AG04450 (cell line): ENCODE measurements at regions of chr12 and their contacts with region 1.

Region 1: GRCh38 chr12:54324617-54325441 is at the start of gene COPZ1:
- DNase-seq: peak; percentile 99
- H3K4me3 ChIP-seq: peak within 1 kb of the TSS; percentile 75
- H3K27ac ChIP-seq: peak within 1 kb of the TSS; percentile 88
- H3K27me3 ChIP-seq: no peaks in the 10 kb centered on the region
- CTCF ChIP-seq: peak; percentile 83
- polyA plus RNA-seq, gene COPZ1: 355 and 404 TPM in 2 replicates

Region 2: DNA sequence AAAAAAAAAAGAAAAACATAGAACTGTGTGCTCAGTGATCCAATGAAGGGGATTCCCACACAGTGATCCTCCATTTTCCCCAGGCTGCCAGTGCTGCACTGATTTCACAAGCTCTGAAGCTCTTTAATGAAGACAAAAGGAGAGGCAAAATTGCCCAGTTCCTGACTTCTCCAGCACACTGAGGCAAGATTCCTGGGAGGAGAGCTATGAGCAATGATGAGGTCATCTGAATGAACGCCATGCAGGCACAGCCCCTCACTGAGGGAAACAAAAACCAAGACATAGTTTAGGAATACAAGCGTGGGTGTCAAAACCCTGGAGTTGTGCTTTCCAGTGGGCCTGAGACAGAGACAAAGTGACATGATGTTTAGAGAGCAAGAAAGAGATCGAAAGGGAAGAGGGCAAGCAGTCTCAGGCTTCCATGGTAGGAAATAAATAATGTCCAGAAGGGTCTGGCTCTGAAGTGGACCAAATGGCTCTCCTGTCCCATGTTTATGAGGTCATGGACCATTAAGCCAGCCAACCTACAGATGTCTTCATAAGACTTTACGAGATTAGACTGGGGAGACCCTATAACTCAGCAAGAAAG is 95.1 kb before region 1 on chr12:
- CTCF ChIA-PET with region 1: interaction called, 13 read pairs
- POLR2A ChIA-PET with region 1: no interaction called
- DNase-seq: peak; percentile 92
- H3K4me3 ChIP-seq: no peak overlapping the region
- H3K27ac ChIP-seq: peak overlapping the region; percentile 82
- H3K27me3 ChIP-seq: no peaks in the 10 kb centered on the region
- CTCF ChIP-seq: no peak

Region 3: DNA sequence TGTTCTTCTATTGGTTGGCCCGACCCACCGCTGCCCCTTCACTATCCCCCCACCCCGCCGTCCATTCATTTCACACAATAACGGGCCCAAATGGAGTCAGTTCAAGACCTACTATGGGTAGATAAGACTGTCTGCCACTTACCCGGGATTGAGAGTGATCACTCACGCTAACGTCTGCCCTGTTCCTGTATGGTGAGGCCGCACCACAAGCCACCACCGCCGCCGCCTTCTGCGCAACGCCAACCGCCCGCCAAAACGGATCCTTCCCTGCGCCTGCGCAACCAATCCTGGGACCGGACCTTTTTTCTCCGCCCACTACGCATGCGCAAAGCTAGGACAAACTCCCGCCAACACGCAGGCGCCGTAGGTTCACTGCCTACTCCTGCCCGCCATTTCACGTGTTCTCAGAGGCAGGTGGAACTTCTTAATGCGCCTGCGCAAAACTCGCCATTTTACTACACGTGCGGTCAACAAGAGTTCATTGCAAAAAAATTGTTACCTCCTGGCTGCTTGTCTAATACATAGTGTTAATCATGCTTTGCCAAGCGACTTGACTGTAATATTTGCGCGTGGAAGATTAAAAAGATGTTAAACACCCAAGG is 44.9 kb before region 1 on chr12 and contains the start of gene CBX5:
- CTCF ChIA-PET with region 1: interaction called, 37 read pairs
- POLR2A ChIA-PET with region 1: interaction called, 17 read pairs
- DNase-seq: peak; percentile 99
- H3K4me3 ChIP-seq: peak within 1 kb of the TSS; percentile 93
- H3K27ac ChIP-seq: peak within 1 kb of the TSS; percentile 87
- H3K27me3 ChIP-seq: no peaks in the 10 kb centered on the region
- CTCF ChIP-seq: no peak
- polyA plus RNA-seq, gene CBX5: 49.0 and 62.3 TPM in 2 replicates

Region 4: GRCh38 chr12:54300732-54301427 is 23.9 kb before region 1 on chr12 and contains the start of gene NFE2:
- CTCF ChIA-PET with region 1: interaction called, 77 read pairs
- POLR2A ChIA-PET with region 1: no interaction called
- DNase-seq: peak; percentile 51
- H3K4me3 ChIP-seq: peak within 1 kb of the TSS; percentile 54
- H3K27ac ChIP-seq: no peak within 1 kb of the TSS
- H3K27me3 ChIP-seq: peaks cover 36% of the 10 kb centered on the region
- CTCF ChIP-seq: peak; percentile 19
- polyA plus RNA-seq, gene NFE2: 0.25 and 0.37 TPM in 2 replicates

Region 5: DNA sequence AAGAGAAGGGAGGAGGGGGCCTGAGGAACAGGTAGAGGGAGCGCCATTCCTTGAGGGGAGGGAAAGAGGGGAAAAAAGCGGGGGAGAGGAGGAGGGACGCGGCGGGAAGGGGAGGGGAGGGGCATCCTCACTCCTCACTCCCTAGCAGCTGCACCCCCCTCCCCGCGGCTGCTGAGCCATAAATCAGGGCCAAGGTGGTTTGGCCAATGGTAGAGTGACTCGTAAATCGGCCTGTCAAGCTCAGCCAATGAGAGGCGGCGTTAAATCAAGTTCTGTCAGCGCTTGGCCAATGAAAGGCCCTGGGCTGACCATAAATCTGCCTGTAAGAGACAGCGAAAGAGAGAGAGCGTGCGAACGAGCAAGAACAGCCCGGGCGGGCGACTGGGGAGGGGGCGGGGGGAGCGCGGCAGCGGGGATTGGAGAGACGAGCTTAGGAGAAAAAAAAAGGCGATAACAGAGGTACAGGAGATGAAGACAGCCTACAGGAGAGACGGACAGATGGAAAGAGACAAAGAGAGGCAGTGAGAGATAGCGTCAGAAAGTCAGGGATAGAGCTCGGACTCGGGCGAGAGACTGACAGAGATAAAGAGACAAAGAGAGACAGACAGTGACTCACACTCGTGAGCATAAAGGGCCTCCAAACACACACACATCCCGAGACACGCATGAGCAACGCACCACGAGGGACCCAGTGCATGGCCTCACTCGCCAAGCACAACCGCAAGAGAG is 34.4 kb after region 1 on chr12:
- CTCF ChIA-PET with region 1: interaction called, 18 read pairs
- POLR2A ChIA-PET with region 1: interaction called, 16 read pairs
- DNase-seq: peak; percentile 99
- H3K4me3 ChIP-seq: peak overlapping the region; percentile 65
- H3K27ac ChIP-seq: peak overlapping the region; percentile 97
- H3K27me3 ChIP-seq: no peaks in the 10 kb centered on the region
- CTCF ChIP-seq: no peak